ENCODE measurements at regions of chr4 and their contacts with region 1.

Region 1: DNA sequence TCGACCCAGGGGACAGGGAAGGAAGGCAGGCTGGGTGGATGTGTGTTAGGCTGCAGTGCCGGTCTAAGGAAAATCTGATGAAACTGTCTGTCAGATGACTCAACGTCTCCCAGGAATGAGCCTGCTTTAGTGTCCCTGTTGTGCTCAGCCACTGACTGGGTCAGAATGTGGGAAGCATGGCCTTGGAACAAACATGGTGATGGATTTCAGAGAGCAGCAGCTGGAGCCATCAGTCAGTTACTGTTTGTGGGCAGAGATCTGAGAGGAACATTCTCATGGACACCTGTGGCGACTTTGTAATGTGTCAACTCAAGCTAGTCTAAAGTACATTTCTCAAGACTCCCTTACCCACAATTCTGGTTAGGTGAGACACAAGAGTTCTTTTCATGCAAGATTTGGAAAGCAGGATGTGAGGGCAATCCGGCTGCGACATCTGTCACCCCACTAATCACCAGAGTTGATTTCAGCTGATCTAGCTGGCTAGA is 63.2 kb downstream of the ANAPC10 start:
- DNase-seq: no peak
- ATAC-seq: no peak
- H3K4me3 ChIP-seq: no peak overlapping the region
- H3K27ac ChIP-seq: no peak overlapping the region
- H3K4me1 ChIP-seq: 0 out of 2 replicates have a peak, but pooled peaks cover 6% of the 10 kb centered on the region
- H3K27me3 ChIP-seq: no peaks in the 10 kb centered on the region
- CTCF ChIP-seq: no peak

Region 2: DNA sequence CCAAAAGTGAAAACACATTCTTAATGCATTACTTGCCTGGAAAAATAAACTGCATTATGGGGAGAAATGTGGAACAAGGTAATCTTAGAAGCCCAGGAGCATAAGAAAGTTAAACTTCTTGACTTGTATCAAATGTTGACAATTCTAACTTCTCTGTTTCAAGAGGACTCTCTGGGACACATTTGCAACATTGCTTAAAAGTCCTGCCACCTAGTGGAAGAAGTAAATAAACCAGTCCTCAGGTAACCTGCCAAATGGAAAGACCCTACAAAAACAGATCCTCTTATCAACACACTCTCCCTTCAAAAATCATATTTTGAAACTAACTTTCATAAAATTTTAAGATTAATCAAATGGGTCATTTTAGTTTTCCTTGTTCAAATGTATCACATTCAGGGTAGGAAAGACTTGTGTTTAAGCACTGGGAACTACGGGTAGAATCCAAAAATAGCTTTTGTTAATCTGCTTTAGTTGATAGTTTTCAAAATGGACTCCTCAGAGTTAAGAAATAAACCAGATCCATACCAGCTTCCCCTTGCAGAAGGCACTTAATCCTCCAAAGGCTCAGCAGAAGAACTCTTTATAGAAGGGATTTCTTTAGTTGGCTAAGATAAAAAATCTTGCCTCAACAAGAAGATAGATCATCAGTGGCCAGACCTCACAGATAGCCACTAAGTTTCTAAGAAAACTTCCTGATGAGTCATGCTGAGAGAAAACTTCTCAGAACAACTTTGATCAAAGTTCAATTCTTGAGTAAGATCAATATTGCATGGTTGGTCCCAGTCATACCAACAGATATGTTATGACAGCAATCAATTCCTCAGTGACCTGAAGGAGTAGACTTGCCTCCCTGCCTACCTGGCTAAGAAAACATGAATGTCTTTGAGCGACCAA is 247.2 kb before region 1 on chr4:
- CTCF ChIA-PET with region 1: no interaction called
- POLR2A ChIA-PET with region 1: no interaction called
- intact Hi-C with region 1: loop called (anchors 10 kb)
- DNase-seq: peak; percentile 62
- ATAC-seq: peak; percentile 49; the same call in 1 of the 2 replicates
- H3K4me3 ChIP-seq: no peak overlapping the region
- H3K27ac ChIP-seq: no peak overlapping the region
- H3K4me1 ChIP-seq: peaks cover 2% of the 10 kb centered on the region; the same call in 1 of the 2 replicates
- H3K27me3 ChIP-seq: no peaks in the 10 kb centered on the region
- CTCF ChIP-seq: peak; percentile 87

Region 3: DNA sequence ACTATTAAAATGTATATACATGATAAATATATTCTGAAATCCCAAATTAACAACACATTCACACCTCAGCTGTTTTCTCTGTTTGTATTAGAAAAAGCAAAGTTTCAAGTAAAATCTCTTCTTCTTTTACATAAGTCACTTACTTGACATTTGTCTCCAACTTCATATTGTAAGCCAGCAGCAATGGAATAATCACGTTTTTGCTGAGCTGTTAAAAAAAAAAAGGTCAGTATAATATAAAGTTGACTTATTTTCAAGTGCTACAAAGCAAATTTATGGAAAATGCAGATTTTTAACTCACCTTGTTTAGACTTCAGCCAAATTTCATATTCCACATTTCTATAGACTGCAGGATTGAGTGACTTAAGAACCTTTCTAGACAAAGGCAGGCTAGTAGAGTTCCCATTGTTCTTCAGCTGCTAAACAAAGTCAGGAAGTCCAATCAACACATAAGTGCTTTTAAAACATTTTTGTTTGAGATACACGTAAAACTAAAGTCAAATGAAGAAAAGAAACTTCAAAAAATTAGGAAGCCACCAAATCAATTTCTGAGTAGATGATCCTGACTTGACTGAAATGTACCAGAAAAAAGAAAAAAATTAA is 120.6 kb after region 1 on chr4:
- CTCF ChIA-PET with region 1: no interaction called
- POLR2A ChIA-PET with region 1: no interaction called
- intact Hi-C with region 1: no loop called
- DNase-seq: no peak
- ATAC-seq: no peak
- H3K4me3 ChIP-seq: no peak overlapping the region
- H3K27ac ChIP-seq: no peak overlapping the region
- H3K4me1 ChIP-seq: no peaks in the 10 kb centered on the region
- H3K27me3 ChIP-seq: no peaks in the 10 kb centered on the region
- CTCF ChIP-seq: no peak

Measured in PC-3 (cell line).